CD8-positive, alpha-beta T cell (primary cell): ENCODE measurements at regions of chr6 and their contacts with region 1.

Region 1: GRCh38 chr6:97717086-97717485 is 434.1 kb upstream of the MMS22L start:
- DNase-seq: no peak
- ATAC-seq: no peak
- H3K4me3 ChIP-seq: no peak overlapping the region
- H3K4me3 Mint-ChIP-seq: no peak overlapping the region
- H3K27ac ChIP-seq: no peak overlapping the region
- H3K27ac Mint-ChIP-seq: no peak overlapping the region
- H3K4me1 ChIP-seq: no peaks in the 10 kb centered on the region
- H3K4me1 Mint-ChIP-seq: no peaks in the 10 kb centered on the region
- H3K27me3 ChIP-seq: no peaks in the 10 kb centered on the region
- H3K27me3 Mint-ChIP-seq: no peaks in the 10 kb centered on the region
- CTCF ChIP-seq: no peak

Region 2: DNA sequence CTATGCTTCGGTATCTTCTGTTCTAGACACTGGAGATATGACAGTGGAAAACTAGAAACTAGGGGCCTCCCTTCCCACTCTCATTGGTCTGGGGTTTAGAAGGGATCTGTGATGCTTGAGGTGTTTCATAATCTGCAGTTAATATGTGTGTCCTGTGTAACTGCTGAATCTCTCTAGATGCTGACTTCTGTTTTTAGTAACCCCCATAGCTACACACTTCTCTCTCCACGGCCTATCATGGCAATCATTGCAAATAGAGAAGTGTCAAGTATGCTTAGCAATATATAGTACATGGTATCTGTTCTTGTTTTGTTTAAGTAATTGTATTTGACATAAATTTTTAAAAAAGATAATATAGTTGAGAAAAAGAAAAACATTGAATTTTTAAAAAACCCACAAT is 39.5 kb before region 1 on chr6:
- CTCF ChIA-PET with region 1: no interaction called
- POLR2A ChIA-PET with region 1: no interaction called
- intact Hi-C with region 1: loop called in 1 of 2 experiments (anchors 1 kb)
- DNase-seq: no peak
- ATAC-seq: no peak
- H3K4me3 ChIP-seq: no peak overlapping the region
- H3K4me3 Mint-ChIP-seq: no peak overlapping the region
- H3K27ac ChIP-seq: no peak overlapping the region
- H3K27ac Mint-ChIP-seq: no peak overlapping the region
- H3K4me1 ChIP-seq: no peaks in the 10 kb centered on the region
- H3K4me1 Mint-ChIP-seq: no peaks in the 10 kb centered on the region
- H3K27me3 ChIP-seq: no peaks in the 10 kb centered on the region
- H3K27me3 Mint-ChIP-seq: no peaks in the 10 kb centered on the region
- CTCF ChIP-seq: no peak

Region 3: DNA sequence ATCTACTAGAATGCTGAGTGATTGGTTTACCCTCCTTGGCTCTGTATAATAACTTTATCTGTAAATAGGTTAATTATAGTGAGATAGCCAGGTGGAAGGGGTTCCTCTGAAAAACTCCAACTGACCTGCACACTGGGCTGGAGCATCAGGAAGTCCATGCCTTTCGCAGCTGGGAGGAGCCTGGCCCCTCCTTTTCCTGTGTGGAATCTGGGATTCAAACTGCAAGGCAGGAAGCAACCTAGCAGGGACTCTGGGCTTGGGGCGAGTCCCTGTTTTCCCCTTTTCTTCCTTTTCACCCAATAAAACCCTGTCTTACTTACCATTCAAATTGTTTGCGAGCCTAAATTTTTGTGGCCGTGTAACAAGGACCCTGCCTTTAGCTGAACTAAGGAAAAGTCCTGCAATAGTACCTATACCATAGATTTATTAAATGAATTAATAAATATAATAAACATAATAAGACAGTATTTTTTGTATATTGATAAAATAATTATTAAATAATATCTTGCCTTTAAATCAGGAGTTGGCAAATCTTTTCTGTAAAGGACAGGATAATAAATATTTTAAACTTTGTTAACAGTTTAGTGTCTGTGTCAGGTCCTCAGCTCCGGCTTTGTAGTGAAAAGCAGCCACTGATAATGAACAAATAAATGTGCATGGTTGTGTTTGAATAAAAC is 27.9 kb before region 1 on chr6:
- CTCF ChIA-PET with region 1: no interaction called
- POLR2A ChIA-PET with region 1: no interaction called
- intact Hi-C with region 1: no loop called
- DNase-seq: no peak
- ATAC-seq: no peak
- H3K4me3 ChIP-seq: no peak overlapping the region
- H3K4me3 Mint-ChIP-seq: no peak overlapping the region
- H3K27ac ChIP-seq: no peak overlapping the region
- H3K27ac Mint-ChIP-seq: no peak overlapping the region
- H3K4me1 ChIP-seq: no peaks in the 10 kb centered on the region
- H3K4me1 Mint-ChIP-seq: no peaks in the 10 kb centered on the region
- H3K27me3 ChIP-seq: no peaks in the 10 kb centered on the region
- H3K27me3 Mint-ChIP-seq: no peaks in the 10 kb centered on the region
- CTCF ChIP-seq: no peak

Region 4: DNA sequence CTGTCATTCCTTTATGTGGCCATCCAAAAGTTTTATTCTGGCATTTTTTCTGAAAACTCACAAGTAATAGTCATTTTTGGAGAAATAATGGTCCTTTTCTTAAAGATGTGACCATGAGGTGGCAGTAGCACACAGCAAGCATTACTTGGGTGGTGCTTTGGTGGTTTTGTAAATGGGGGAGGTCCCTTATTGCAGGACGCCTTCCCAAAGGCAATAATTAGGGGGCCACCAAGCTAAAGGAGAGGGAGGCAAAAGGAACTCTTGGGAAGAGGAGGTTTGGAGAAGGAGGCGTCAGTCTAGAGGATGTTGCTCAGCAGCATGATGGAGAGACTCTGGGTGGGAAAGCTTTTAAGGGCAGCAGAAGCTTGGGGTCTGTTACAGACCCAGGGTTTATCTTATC is 11.5 kb before region 1 on chr6:
- CTCF ChIA-PET with region 1: no interaction called
- POLR2A ChIA-PET with region 1: no interaction called
- intact Hi-C with region 1: no loop called
- DNase-seq: no peak
- ATAC-seq: no peak
- H3K4me3 ChIP-seq: no peak overlapping the region
- H3K4me3 Mint-ChIP-seq: no peak overlapping the region
- H3K27ac ChIP-seq: no peak overlapping the region
- H3K27ac Mint-ChIP-seq: no peak overlapping the region
- H3K4me1 ChIP-seq: no peaks in the 10 kb centered on the region
- H3K4me1 Mint-ChIP-seq: no peaks in the 10 kb centered on the region
- H3K27me3 ChIP-seq: no peaks in the 10 kb centered on the region
- H3K27me3 Mint-ChIP-seq: no peaks in the 10 kb centered on the region
- CTCF ChIP-seq: no peak